Caco-2 (cell line): ENCODE measurements at regions of chr3 and their contacts with region 1.

Region 1: GRCh38 chr3:184250167-184250828 is 826 bp downstream of the EEF1AKMT4 start:
- DNase-seq: peak; percentile 93
- H3K4me3 ChIP-seq: peak overlapping the region; percentile 89
- H3K4me3 Mint-ChIP-seq: peak overlapping the region; percentile 89
- H3K27ac Mint-ChIP-seq: peak overlapping the region; percentile 96
- H3K4me1 ChIP-seq: no peaks in the 10 kb centered on the region
- H3K4me1 Mint-ChIP-seq: no peaks in the 10 kb centered on the region
- H3K27me3 ChIP-seq: no peaks in the 10 kb centered on the region
- H3K27me3 Mint-ChIP-seq: no peaks in the 10 kb centered on the region
- CTCF ChIP-seq: peak; percentile 74 to 92

Region 2: GRCh38 chr3:184145111-184145524 is 105.2 kb before region 1 on chr3:
- CTCF ChIA-PET with region 1: no interaction called
- POLR2A ChIA-PET with region 1: no interaction called
- intact Hi-C with region 1: loop called (anchors 2 kb)
- DNase-seq: peak; percentile 64
- H3K4me3 ChIP-seq: no peak overlapping the region
- H3K4me3 Mint-ChIP-seq: no peak overlapping the region
- H3K27ac Mint-ChIP-seq: no peak overlapping the region
- H3K4me1 ChIP-seq: no peaks in the 10 kb centered on the region
- H3K4me1 Mint-ChIP-seq: no peaks in the 10 kb centered on the region
- H3K27me3 ChIP-seq: no peaks in the 10 kb centered on the region
- H3K27me3 Mint-ChIP-seq: no peaks in the 10 kb centered on the region
- CTCF ChIP-seq: peak; percentile 36 to 64

Region 3: GRCh38 chr3:184261270-184261853 is 11.1 kb after region 1 on chr3 and contains the start of gene CAMK2N2:
- CTCF ChIA-PET with region 1: no interaction called
- POLR2A ChIA-PET with region 1: no interaction called
- intact Hi-C with region 1: loop called (anchors 1 kb)
- DNase-seq: peak; percentile 82 to 86
- H3K4me3 ChIP-seq: peak within 1 kb of the TSS; percentile 50
- H3K4me3 Mint-ChIP-seq: peak within 1 kb of the TSS; percentile 83
- H3K27ac Mint-ChIP-seq: no peak within 1 kb of the TSS
- H3K4me1 ChIP-seq: peaks cover 9% of the 10 kb centered on the region; the same call in 1 of the 2 replicates
- H3K4me1 Mint-ChIP-seq: peaks cover 8% of the 10 kb centered on the region
- H3K27me3 ChIP-seq: peaks cover 4% of the 10 kb centered on the region
- H3K27me3 Mint-ChIP-seq: peaks cover 18% of the 10 kb centered on the region
- CTCF ChIP-seq: no peak
- total RNA-seq, gene CAMK2N2: 0.46 and 0.66 TPM in 2 replicates

Region 4: GRCh38 chr3:184298759-184299496 is 48.6 kb after region 1 on chr3 and contains the start of gene PSMD2:
- CTCF ChIA-PET with region 1: no interaction called
- POLR2A ChIA-PET with region 1: no interaction called
- intact Hi-C with region 1: loop called (anchors 1 kb)
- DNase-seq: peak; percentile 97
- H3K4me3 ChIP-seq: peak within 1 kb of the TSS; percentile 77
- H3K4me3 Mint-ChIP-seq: peak within 1 kb of the TSS; percentile 81
- H3K27ac Mint-ChIP-seq: peak within 1 kb of the TSS; percentile 80
- H3K4me1 ChIP-seq: peaks cover 6% of the 10 kb centered on the region; the same call in 1 of the 2 replicates
- H3K4me1 Mint-ChIP-seq: no peaks in the 10 kb centered on the region
- H3K27me3 ChIP-seq: no peaks in the 10 kb centered on the region
- H3K27me3 Mint-ChIP-seq: no peaks in the 10 kb centered on the region
- CTCF ChIP-seq: no peak
- total RNA-seq, gene PSMD2: 285 and 294 TPM in 2 replicates

Region 5: DNA sequence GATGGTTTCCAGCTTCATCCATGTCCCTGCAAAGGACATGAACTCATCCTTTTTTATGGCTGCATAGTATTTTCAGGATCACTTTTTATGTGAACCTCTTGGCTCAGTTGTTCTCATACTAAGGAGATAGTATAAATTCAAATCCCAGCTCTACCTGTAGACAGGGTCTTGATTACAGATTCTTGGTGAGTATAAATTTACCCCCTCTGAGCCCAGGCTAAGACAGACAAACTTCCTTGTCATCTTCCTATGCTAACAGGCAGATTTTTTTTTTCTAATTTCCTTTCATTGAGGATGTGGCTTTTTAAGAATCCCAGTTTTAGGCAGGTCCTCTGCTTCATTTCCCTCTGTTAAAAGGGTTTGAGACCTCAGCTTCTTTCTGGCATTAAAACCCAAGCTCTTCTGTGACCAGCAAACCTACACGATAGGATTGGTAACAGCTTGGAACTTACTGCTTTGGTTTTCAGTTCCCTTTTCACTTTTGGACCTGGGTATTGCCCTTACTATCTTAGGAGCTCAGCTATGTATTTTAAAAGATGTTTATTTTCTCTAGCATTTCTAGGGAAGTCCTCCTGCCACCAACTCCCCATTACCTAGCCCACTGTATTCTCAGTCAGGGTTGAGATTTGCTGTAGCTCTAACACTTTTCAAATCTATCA is 634.2 kb after region 1 on chr3:
- CTCF ChIA-PET with region 1: no interaction called
- POLR2A ChIA-PET with region 1: no interaction called
- intact Hi-C with region 1: no loop called
- DNase-seq: no peak
- H3K4me3 ChIP-seq: no peak overlapping the region
- H3K4me3 Mint-ChIP-seq: no peak overlapping the region
- H3K27ac Mint-ChIP-seq: no peak overlapping the region
- H3K4me1 ChIP-seq: no peaks in the 10 kb centered on the region
- H3K4me1 Mint-ChIP-seq: no peaks in the 10 kb centered on the region
- H3K27me3 ChIP-seq: no peaks in the 10 kb centered on the region
- H3K27me3 Mint-ChIP-seq: no peaks in the 10 kb centered on the region
- CTCF ChIP-seq: no peak